ENCODE measurements at regions of chr1 and their contacts with region 1.

Region 1: DNA sequence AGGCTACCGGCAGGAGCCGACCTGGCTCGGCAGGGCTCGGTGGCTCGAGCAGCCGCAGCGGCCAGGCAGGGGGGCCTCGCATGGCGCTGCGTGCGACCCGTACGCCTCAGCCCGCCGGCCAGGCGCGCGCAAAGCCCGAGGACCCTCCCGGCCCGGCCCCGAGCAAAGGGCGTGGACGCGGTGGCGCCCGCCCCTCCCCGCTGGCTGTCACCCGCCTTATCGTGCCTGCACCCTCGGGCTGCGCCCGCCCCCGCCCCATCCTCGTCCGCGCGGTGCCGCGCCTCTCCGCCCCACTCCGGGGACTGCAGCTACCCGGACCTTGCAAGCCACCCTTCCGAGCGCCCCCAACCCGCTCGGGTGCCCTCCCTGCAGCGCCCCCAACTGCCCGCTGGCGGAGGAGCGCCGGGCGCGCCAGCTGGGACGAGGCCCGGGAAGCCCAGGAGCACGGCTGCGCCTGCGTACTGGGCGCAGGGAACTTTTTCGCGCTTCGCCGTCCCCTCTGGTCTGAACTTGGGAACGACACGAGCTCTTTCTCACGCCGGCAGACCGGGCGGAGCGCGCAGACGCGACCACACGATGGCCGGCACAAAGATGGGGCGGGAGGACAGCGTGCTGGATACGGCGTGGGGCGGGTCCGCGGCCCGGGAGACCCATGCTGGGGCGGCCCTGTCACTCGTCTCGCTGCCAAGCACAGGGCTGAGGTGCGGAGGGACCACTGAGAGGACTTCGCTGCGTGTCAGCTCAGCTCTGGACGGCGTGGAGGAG is at the start of gene ABCB10:
- DNase-seq: peak; percentile 96
- ATAC-seq: peak; percentile 94 to 95
- total RNA-seq, gene ABCB10: 10.1 to 14.8 TPM

Region 2: GRCh38 chr1:229620876-229621275 is 62.1 kb after region 1 on chr1:
- intact Hi-C with region 1: loop called (anchors 2 to 5 kb)
- DNase-seq: no peak
- ATAC-seq: peak in 1 of 2 donors; percentile 35

Region 3: GRCh38 chr1:229625915-229626831 is 67.4 kb after region 1 on chr1 and contains the starts of genes TAF5L and URB2:
- intact Hi-C with region 1: loop called (anchors 2 to 5 kb)
- DNase-seq: peak; percentile 90
- ATAC-seq: peak; percentile 98
- total RNA-seq, gene TAF5L: 10.8 to 14.7 TPM
- total RNA-seq, gene URB2: 3.6 to 8.4 TPM